ENCODE measurements at regions of chr1 and their contacts with region 1.

Region 1: DNA sequence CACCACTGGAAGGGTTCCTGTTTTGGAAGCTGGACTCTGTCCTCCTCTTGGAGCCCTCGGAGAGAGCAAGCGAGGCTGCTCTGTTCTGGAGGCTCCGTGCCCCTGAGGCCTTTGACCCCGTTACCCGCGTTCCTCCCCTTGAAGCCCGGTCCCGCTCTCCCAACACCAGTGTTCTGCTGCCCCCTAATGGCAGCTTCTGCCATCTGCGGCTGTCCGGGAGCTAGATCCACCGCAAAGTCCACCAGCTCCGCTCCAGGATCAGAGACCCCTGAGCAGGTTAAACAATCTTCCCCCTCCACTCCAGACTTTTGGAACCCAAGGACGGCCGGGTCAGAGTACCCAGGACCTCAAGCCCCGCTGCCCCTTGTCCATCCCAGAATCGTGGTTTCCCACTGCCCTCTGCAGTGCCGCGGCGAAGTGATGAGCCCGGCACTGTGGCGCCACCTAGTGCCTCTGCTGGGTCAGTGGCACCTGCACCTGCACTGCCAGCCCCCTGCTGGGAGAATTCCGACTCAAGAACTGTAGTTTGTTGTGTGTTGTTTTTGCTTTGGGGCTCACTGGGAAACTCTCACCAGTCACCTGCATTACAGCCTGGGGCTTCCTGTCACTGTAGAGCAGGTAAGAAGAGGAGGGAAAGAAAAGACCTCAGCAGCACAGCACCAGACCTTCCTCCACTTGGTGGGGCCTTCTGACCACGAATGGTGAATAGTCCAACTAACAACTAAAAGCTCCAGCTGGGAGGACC is 63.5 kb upstream of the NFASC start:
- DNase-seq: peak; percentile 94
- H3K4me3 Mint-ChIP-seq: peak overlapping the region; percentile 69
- H3K27ac Mint-ChIP-seq: no peak overlapping the region
- H3K4me1 Mint-ChIP-seq: no peaks in the 10 kb centered on the region
- H3K27me3 Mint-ChIP-seq: peaks cover 25% of the 10 kb centered on the region
- CTCF ChIP-seq: peak; percentile 99

Region 2: DNA sequence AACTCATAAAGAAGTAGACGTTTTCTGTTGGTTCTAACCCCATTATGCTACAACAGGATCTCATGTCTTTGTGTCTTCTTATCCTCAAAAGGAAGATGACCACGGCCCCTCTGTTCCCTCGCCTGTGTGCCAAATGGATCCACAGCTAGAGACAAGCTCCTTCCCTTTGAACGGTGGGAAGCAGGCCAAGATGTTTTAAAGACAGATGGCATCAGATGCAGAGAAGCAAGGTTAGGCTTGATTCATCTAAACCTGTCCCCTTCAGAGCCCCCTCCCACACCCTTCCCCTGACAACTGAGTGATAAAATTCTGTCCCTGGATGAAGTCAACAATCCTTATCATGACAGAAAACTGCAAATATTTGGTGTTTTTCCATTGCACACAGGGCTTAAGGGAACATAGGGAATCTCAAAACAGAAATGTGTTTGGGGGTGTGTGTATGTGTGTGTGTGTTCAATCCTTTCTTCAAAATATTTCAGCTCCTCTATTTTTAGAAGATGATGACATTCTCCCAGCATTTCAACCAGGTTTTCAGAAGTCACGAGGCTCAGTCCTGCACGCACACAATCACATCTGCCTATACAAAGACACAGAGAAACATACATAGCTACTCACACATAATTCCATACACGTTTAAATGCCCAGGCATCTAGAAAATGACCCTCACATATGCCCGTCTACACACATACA is 1428.4 kb before region 1 on chr1:
- CTCF ChIA-PET with region 1: no interaction called
- POLR2A ChIA-PET with region 1: no interaction called
- intact Hi-C with region 1: no loop called
- DNase-seq: no peak
- H3K4me3 Mint-ChIP-seq: no peak overlapping the region
- H3K27ac Mint-ChIP-seq: no peak overlapping the region
- H3K4me1 Mint-ChIP-seq: no peaks in the 10 kb centered on the region
- H3K27me3 Mint-ChIP-seq: peaks cover 57% of the 10 kb centered on the region
- CTCF ChIP-seq: no peak

Region 3: DNA sequence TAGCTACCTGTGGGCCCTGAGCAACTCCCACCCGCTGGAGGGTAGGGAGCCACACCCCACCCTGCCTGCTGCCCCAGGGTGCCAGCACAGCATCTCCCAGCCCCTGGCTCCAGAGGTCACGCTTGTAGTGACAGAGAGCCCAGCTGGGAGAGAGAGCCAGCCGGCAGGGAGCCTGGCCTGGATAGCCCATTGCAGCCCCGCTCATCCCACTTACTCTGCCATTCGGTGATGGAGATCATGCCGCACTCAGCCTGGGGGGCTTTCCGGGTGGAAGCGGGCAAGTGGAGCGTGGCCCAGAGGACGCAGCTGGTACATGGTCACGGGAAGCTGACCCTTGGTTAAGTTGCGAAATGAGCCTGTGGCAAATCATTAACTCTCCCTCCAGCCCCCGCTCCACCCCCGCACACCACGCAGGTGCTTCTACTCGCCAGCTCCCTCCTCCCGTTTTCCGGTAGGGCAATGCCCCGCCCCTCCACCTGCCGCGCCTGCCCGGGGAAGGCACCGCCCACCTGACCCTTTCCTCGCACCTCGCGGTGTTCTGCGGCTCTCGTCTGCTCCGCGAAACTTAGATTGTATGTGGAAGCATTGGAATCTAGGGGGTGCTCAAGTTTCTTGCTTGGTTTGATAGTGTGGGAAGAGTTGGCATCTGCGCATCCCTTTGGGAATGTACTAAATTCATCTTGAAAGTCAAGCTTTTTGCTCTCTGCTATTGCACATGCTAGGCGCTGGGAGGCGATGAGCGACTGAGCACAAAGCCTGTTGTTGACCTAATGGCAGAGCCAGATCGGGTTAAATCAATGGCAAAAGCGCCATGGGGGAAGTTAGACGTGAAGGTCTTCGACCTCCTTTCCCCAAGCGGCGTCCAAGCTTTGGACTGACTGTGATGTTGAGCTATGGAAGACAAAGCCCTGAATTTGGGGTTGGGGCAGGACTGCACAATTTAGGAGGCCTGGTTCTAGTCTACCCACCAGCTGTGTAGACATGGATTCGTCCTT is 593.1 kb before region 1 on chr1 and contains the start of gene GOLT1A:
- CTCF ChIA-PET with region 1: no interaction called
- POLR2A ChIA-PET with region 1: no interaction called
- intact Hi-C with region 1: no loop called
- DNase-seq: peak; percentile 93
- H3K4me3 Mint-ChIP-seq: peak within 1 kb of the TSS; percentile 68
- H3K27ac Mint-ChIP-seq: peak within 1 kb of the TSS; percentile 8
- H3K4me1 Mint-ChIP-seq: peaks cover 6% of the 10 kb centered on the region
- H3K27me3 Mint-ChIP-seq: no peaks in the 10 kb centered on the region
- CTCF ChIP-seq: peak; percentile 93
- total RNA-seq, gene GOLT1A: 11.5 and 12.7 TPM in 2 replicates

Region 4: DNA sequence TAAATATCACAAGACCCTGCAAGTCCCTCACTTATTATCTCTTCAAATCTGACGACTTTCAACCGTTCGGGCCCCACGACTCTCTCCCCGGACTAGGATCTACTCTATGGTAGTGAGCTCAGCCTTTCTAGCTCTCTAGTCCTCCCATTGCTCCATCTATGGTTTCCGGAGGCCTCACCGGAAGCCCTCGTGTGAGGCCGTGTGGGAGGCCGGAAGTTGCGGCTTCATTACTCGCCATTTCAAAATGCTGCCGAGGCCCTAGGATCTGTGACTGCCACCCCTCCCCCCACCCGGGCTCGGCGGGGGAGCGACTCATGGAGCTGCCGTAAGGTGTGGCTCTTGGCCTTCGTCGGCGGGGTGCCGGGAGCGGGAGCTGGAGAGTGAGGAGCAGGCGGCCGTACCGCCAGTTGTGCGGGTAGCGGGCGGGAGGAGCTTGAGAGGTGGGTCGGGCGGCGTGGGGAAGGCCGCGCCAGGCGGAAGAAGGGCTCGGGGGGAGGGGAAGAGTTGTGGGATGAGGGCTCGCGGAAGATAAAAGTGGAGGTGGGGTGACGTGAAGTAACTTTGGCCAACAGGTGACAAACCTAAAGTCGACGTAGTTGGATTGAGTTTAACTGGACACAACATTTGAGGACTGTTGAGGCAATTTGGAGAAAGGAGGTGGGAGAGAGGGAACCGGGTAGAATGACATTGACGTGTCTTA is 290.8 kb before region 1 on chr1 and contains the start of gene MDM4:
- CTCF ChIA-PET with region 1: interaction called, 34 read pairs
- POLR2A ChIA-PET with region 1: interaction called, 4 read pairs
- intact Hi-C with region 1: no loop called
- DNase-seq: peak; percentile 100
- H3K4me3 Mint-ChIP-seq: no peak within 1 kb of the TSS
- H3K27ac Mint-ChIP-seq: no peak within 1 kb of the TSS
- H3K4me1 Mint-ChIP-seq: peaks cover 12% of the 10 kb centered on the region
- H3K27me3 Mint-ChIP-seq: no peaks in the 10 kb centered on the region
- CTCF ChIP-seq: no peak
- total RNA-seq, gene MDM4: 162 and 174 TPM in 2 replicates

Region 5: GRCh38 chr1:204615881-204616280 is 191.2 kb before region 1 on chr1:
- CTCF ChIA-PET with region 1: interaction called, 22 read pairs
- POLR2A ChIA-PET with region 1: no interaction called
- intact Hi-C with region 1: no loop called
- DNase-seq: no peak
- H3K4me3 Mint-ChIP-seq: no peak overlapping the region
- H3K27ac Mint-ChIP-seq: no peak overlapping the region
- H3K4me1 Mint-ChIP-seq: no peaks in the 10 kb centered on the region
- H3K27me3 Mint-ChIP-seq: peaks cover 55% of the 10 kb centered on the region
- CTCF ChIP-seq: no peak

Region 6: DNA sequence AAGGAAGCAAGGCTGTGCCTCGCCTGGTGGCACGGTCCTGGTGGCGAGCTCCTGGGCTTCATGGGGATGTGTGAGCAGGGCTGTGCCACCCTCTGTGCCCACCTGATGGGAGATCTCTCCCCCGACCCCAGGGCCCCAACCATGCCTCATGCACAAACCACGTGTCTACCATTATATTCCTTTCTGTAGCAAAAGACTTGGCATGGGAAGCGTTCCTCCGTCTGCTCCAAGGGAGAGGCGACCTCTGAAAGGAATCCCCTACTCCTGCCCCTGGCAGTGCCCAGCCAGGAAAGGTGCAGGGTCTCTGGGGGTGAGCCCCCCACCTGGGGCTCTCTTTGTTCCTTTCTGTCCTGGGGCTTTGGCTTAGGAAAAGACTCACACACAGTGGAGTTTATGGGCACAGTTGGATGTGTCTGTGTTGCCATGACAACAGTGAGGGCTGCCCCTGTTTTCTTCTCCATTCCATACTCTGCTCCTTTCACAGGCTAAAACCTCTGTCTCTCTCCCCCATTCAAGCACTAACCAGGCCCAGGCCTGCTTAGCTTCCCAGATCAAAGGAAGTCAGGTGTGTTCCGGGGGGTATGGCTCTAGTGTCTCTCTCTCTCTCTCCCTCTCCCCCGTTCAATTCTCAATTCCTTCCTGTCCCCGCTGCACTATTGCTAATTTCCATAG is 100.1 kb before region 1 on chr1:
- CTCF ChIA-PET with region 1: interaction called, 34 read pairs
- POLR2A ChIA-PET with region 1: interaction called, 6 read pairs
- intact Hi-C with region 1: no loop called
- DNase-seq: no peak
- H3K4me3 Mint-ChIP-seq: no peak overlapping the region
- H3K27ac Mint-ChIP-seq: peak overlapping the region; percentile 1
- H3K4me1 Mint-ChIP-seq: peaks cover 19% of the 10 kb centered on the region
- H3K27me3 Mint-ChIP-seq: peaks cover 15% of the 10 kb centered on the region
- CTCF ChIP-seq: no peak

Region 7: DNA sequence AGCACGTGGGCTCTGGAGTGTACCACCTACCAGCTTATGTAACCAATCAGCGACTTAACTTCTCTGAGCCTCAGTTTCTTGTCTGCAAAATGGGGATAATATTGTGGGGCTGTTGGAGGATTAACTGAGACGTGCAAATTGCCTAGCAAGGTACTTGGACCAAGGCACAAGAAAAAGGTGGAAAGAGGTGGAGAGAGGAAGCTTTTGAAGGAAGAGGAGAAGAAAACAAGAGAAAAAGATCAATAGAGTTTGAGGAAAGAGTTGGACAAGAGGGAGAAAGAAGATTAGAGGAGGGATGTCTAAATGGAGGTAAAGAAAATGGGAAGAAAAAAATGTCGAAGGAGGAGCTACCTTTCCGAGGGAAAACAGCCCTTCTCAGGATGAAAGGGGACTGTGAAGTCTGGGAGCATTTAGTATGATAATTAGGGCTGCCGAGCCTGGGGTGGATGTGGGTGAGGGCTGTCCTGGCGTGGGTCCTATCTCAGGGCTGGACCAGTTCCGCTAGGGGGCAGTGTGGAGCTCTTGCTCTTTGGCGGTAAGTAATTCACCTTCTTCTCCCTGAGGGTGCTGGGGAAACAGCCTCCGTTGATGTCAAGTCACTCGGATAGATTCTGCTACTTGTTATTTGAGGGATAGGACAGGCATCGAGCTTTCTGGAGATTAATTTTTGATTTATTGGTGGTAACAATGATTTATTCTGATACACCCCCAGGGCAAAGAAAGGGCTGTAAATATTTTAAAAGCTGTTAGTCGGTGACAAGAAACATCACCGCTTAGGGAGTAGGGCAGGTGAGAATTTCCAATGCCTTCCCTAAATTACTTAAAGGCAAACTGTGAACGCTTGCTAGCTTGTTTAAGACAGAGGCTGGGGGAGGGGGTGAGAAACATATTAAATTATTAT is 15.4 kb before region 1 on chr1:
- CTCF ChIA-PET with region 1: interaction called, 179 read pairs
- POLR2A ChIA-PET with region 1: interaction called, 3 read pairs
- intact Hi-C with region 1: loop called (anchors 1 kb)
- DNase-seq: peak; percentile 81
- H3K4me3 Mint-ChIP-seq: no peak overlapping the region
- H3K27ac Mint-ChIP-seq: no peak overlapping the region
- H3K4me1 Mint-ChIP-seq: no peaks in the 10 kb centered on the region
- H3K27me3 Mint-ChIP-seq: peaks cover 54% of the 10 kb centered on the region
- CTCF ChIP-seq: peak; percentile 96

Region 8: GRCh38 chr1:204941421-204942338 is 134.6 kb after region 1 on chr1:
- CTCF ChIA-PET with region 1: interaction called, 165 read pairs
- POLR2A ChIA-PET with region 1: interaction called, 4 read pairs
- intact Hi-C with region 1: loop called (anchors 1 kb)
- DNase-seq: peak; percentile 82
- H3K4me3 Mint-ChIP-seq: no peak overlapping the region
- H3K27ac Mint-ChIP-seq: no peak overlapping the region
- H3K4me1 Mint-ChIP-seq: no peaks in the 10 kb centered on the region
- H3K27me3 Mint-ChIP-seq: peaks cover 10% of the 10 kb centered on the region
- CTCF ChIP-seq: peak; percentile 95

Measured in MCF 10A (cell line).